PC-9 (cell line): ENCODE measurements at regions of chr14 and their contacts with region 1.

Region 1: DNA sequence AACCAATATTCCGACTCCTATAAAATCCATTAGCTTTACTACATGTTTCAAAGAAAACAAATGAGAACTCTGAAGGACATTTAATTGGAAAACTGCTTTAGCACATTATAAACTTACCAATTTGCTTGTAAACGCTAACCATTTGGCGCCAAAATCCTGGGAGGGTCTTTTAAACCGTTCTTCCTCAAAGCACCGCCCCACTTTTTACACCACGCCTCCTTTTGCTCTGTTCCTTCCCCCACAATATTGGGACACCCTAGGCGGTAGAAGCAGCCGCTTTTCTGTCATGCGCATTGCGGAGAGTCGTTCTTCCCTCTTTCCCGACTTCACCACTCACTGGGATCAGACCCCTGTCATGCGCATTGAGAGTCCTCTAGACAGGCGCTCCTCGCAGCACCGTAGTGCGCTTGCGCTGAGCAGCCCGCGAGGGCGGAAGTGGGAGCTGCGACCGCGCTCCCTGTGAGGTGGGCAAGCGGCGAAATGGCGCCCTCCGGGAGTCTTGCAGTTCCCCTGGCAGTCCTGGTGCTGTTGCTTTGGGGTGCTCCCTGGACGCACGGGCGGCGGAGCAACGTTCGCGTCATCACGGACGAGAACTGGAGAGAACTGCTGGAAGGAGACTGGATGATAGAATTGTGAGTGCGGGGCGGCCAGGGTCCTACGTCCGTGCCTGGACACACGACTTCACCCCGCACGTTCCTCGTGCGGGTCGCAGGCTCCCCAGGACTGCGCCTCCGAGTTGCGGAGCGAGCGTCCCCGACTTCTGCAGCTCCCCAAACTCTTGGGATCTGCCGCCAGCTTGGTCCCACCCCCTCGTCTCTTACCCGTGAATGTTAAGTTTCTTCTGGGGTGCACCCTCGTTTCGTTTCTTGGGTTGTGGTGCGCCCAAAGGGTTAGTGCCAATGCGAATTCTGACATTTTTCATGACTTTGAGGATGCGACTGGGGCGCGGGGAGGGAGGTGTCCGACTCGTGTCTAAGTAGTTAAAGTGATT is at the start of gene TMX1:
- DNase-seq: peak; percentile 94 to 97
- H3K4me3 ChIP-seq: peak within 1 kb of the TSS; percentile 88
- H3K27ac ChIP-seq: no peak within 1 kb of the TSS
- H3K4me1 ChIP-seq: peaks cover 18% of the 10 kb centered on the region
- H3K27me3 ChIP-seq: no peaks in the 10 kb centered on the region
- CTCF ChIP-seq: no peak
- total RNA-seq, gene TMX1: 35.3 and 36.2 TPM in 2 replicates

Region 2: DNA sequence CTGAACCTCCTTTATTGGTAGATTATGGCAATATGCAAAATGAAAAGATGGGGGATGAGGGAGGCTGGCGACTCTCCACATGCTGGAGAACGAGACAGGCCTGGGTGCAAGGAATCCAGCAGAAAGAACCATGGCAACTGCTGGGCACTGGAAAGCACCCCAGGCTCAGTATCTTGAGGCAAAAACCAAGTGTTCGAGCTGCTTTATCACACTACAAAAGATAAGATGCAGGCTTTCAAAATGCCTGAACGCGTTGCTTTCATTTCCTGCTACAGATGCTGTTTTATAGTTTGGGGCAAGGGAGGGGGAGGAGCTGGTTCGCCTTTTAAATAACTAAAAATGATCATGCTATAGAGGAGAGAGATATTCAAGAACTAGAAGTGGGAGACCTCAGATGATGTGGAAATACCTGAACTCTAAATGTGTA is 448.0 kb before region 1 on chr14:
- CTCF ChIA-PET with region 1: no interaction called
- POLR2A ChIA-PET with region 1: interaction called, 13 read pairs
- intact Hi-C with region 1: no loop called
- DNase-seq: no peak
- H3K4me3 ChIP-seq: no peak overlapping the region
- H3K27ac ChIP-seq: no peak overlapping the region
- H3K4me1 ChIP-seq: no peaks in the 10 kb centered on the region
- H3K27me3 ChIP-seq: no peaks in the 10 kb centered on the region
- CTCF ChIP-seq: no peak

Region 3: DNA sequence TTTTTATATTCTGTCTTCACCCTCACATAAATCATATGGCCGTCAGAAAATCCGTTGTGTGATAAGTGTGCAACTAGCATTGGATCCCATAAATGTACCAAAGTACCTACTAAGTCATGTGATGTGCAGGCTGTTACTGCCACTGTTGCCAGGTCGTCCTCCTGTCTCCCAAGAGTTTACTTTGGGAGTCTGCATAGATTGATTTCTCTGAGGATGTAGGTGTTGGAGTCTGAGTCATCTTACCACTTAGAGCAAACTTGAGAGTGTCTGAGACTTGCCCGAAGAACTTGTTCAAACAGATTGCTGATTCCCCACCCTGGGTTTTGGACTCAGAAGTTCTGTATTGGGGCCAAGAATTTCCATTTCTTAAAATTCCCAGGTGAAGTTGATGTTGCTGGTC is 11.3 kb after region 1 on chr14:
- CTCF ChIA-PET with region 1: interaction called, 13 read pairs
- POLR2A ChIA-PET with region 1: no interaction called
- intact Hi-C with region 1: no loop called
- DNase-seq: no peak
- H3K4me3 ChIP-seq: no peak overlapping the region
- H3K27ac ChIP-seq: no peak overlapping the region
- H3K4me1 ChIP-seq: no peaks in the 10 kb centered on the region
- H3K27me3 ChIP-seq: no peaks in the 10 kb centered on the region
- CTCF ChIP-seq: no peak

Region 4: GRCh38 chr14:51395361-51395849 is 155.3 kb after region 1 on chr14:
- CTCF ChIA-PET with region 1: no interaction called
- POLR2A ChIA-PET with region 1: no interaction called
- intact Hi-C with region 1: no loop called
- DNase-seq: peak in 1 of 2 experiments; percentile 33
- H3K4me3 ChIP-seq: no peak overlapping the region
- H3K27ac ChIP-seq: peak overlapping the region; percentile 95
- H3K4me1 ChIP-seq: peaks cover 63% of the 10 kb centered on the region
- H3K27me3 ChIP-seq: no peaks in the 10 kb centered on the region
- CTCF ChIP-seq: no peak

Region 5: GRCh38 chr14:51410897-51411296 is 170.8 kb after region 1 on chr14:
- CTCF ChIA-PET with region 1: no interaction called
- POLR2A ChIA-PET with region 1: no interaction called
- intact Hi-C with region 1: no loop called
- DNase-seq: no peak
- H3K4me3 ChIP-seq: no peak overlapping the region
- H3K27ac ChIP-seq: no peak overlapping the region
- H3K4me1 ChIP-seq: no peaks in the 10 kb centered on the region
- H3K27me3 ChIP-seq: no peaks in the 10 kb centered on the region
- CTCF ChIP-seq: no peak

Region 6: DNA sequence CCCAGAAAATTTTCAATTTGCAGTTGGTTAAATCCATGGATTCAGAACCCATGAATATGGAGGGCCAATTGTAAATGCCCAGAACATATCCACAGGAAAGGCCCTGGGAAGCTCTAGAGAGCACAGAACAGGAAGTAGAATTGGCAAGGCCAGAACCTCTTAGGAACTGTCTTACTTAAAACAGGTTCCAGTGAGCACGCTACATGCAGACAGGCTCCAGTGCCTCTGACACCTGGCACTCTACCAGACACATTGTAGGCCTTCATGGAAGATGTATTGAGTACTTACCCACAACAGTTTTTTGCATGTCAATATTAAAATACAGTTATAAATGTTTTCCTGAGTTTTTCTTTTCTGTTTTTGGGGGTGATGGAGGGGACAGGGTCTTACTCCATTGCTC is 223.4 kb after region 1 on chr14:
- CTCF ChIA-PET with region 1: no interaction called
- POLR2A ChIA-PET with region 1: no interaction called
- intact Hi-C with region 1: no loop called
- DNase-seq: no peak
- H3K4me3 ChIP-seq: no peak overlapping the region
- H3K27ac ChIP-seq: no peak overlapping the region
- H3K4me1 ChIP-seq: peaks cover 6% of the 10 kb centered on the region; the same call in 1 of the 2 replicates
- H3K27me3 ChIP-seq: no peaks in the 10 kb centered on the region
- CTCF ChIP-seq: no peak

Region 7: GRCh38 chr14:51726166-51726899 is 486.2 kb after region 1 on chr14:
- CTCF ChIA-PET with region 1: no interaction called
- POLR2A ChIA-PET with region 1: interaction called, 11 read pairs
- intact Hi-C with region 1: no loop called
- DNase-seq: no peak
- H3K4me3 ChIP-seq: no peak overlapping the region
- H3K27ac ChIP-seq: no peak overlapping the region
- H3K4me1 ChIP-seq: no peaks in the 10 kb centered on the region
- H3K27me3 ChIP-seq: no peaks in the 10 kb centered on the region
- CTCF ChIP-seq: no peak

Region 8: GRCh38 chr14:52272375-52272774 is 1032.3 kb after region 1 on chr14:
- CTCF ChIA-PET with region 1: no interaction called
- POLR2A ChIA-PET with region 1: no interaction called
- intact Hi-C with region 1: no loop called
- DNase-seq: no peak
- H3K4me3 ChIP-seq: no peak overlapping the region
- H3K27ac ChIP-seq: no peak overlapping the region
- H3K4me1 ChIP-seq: no peaks in the 10 kb centered on the region
- H3K27me3 ChIP-seq: no peaks in the 10 kb centered on the region
- CTCF ChIP-seq: peak; percentile 44